ENCODE measurements at regions of chr17 and their contacts with region 1.

Region 1: GRCh38 chr17:82375359-82376286 is 4.1 kb downstream of the UTS2R start:
- DNase-seq: no peak
- H3K4me3 ChIP-seq: no peak overlapping the region
- H3K27ac ChIP-seq: no peak overlapping the region
- H3K27me3 ChIP-seq: peaks cover 55% of the 10 kb centered on the region
- CTCF ChIP-seq: no peak

Region 2: GRCh38 chr17:82257473-82257872 is 118.2 kb before region 1 on chr17:
- CTCF ChIA-PET with region 1: no interaction called
- POLR2A ChIA-PET with region 1: interaction called, 11 read pairs
- DNase-seq: no peak
- H3K4me3 ChIP-seq: no peak overlapping the region
- H3K27ac ChIP-seq: no peak overlapping the region
- H3K27me3 ChIP-seq: no peaks in the 10 kb centered on the region
- CTCF ChIP-seq: no peak

Measured in AG04450 (cell line).